Activated CD4-positive, alpha-beta T cell treated with anti-CD3 and anti-CD28 coated beads, Interleukin-2, amount 10 ng/mL, durations not matched to agents 24 days and 14 days (primary cell): ENCODE measurements at regions of chr12 and their contacts with region 1.

Region 1: GRCh38 chr12:56189176-56189917 is at the start of gene SMARCC2:
- DNase-seq: peak; percentile 96
- H3K4me3 Mint-ChIP-seq: peak within 1 kb of the TSS; percentile 97
- H3K27ac Mint-ChIP-seq: peak within 1 kb of the TSS; percentile 95
- H3K4me1 Mint-ChIP-seq: peaks cover 42% of the 10 kb centered on the region
- H3K27me3 Mint-ChIP-seq: no peaks in the 10 kb centered on the region
- total RNA-seq, gene SMARCC2: 127 and 130 TPM in 2 replicates

Region 2: GRCh38 chr12:55797068-55797467 is 392.3 kb before region 1 on chr12:
- intact Hi-C with region 1: no loop called
- DNase-seq: peak; percentile 73
- H3K4me3 Mint-ChIP-seq: no peak overlapping the region
- H3K27ac Mint-ChIP-seq: peak overlapping the region; percentile 26
- H3K4me1 Mint-ChIP-seq: peaks cover 8% of the 10 kb centered on the region
- H3K27me3 Mint-ChIP-seq: no peaks in the 10 kb centered on the region

Region 3: GRCh38 chr12:55996715-55997534 is 192.4 kb before region 1 on chr12 and contains the start of gene SUOX:
- intact Hi-C with region 1: no loop called
- DNase-seq: peak; percentile 86
- H3K4me3 Mint-ChIP-seq: peak within 1 kb of the TSS; percentile 87
- H3K27ac Mint-ChIP-seq: peak within 1 kb of the TSS; percentile 53
- H3K4me1 Mint-ChIP-seq: peaks cover 28% of the 10 kb centered on the region
- H3K27me3 Mint-ChIP-seq: no peaks in the 10 kb centered on the region
- total RNA-seq, gene SUOX: 9.3 and 10.2 TPM in 2 replicates

Region 4: DNA sequence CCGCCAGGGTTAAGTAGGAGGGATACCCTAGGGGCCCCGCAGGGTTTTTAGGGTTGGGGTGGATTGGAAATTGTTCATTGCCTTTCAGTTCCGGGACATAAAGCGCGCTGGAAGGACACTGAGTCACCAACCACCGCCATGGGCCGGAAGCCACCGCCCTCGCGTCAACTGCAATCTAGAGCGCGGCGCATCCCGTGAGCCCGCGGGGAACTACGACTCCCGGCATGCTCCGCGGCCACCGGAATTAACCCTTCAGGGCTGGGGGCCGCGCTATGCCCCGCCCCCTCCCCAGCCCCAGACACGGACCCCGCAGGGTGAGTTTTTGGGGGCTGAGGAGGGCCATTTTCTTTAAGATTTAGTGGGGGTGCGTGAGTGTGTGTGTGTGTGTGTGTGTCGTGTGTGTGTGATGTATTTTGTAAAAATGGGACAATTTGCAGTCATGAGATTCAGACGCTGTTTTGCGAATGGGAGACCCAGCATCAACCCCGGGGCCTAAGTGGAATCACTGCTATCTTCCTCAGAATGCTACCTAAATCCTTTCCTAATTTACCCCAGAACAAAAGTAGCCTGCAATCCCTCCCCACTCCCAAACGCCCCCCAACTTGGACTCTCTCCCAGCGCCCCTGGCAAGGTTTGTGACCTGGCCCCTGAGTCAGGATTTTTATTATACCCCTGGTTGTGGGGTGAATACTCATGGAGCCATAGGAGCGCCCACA is 36.9 kb before region 1 on chr12 and contains the start of gene MYL6B:
- intact Hi-C with region 1: loop called (anchors 2 kb)
- DNase-seq: peak; percentile 98
- H3K4me3 Mint-ChIP-seq: peak within 1 kb of the TSS; percentile 88
- H3K27ac Mint-ChIP-seq: peak within 1 kb of the TSS; percentile 98
- H3K4me1 Mint-ChIP-seq: peaks cover 39% of the 10 kb centered on the region
- H3K27me3 Mint-ChIP-seq: no peaks in the 10 kb centered on the region
- total RNA-seq, gene MYL6B: 63.3 and 68.9 TPM in 2 replicates

Region 5: DNA sequence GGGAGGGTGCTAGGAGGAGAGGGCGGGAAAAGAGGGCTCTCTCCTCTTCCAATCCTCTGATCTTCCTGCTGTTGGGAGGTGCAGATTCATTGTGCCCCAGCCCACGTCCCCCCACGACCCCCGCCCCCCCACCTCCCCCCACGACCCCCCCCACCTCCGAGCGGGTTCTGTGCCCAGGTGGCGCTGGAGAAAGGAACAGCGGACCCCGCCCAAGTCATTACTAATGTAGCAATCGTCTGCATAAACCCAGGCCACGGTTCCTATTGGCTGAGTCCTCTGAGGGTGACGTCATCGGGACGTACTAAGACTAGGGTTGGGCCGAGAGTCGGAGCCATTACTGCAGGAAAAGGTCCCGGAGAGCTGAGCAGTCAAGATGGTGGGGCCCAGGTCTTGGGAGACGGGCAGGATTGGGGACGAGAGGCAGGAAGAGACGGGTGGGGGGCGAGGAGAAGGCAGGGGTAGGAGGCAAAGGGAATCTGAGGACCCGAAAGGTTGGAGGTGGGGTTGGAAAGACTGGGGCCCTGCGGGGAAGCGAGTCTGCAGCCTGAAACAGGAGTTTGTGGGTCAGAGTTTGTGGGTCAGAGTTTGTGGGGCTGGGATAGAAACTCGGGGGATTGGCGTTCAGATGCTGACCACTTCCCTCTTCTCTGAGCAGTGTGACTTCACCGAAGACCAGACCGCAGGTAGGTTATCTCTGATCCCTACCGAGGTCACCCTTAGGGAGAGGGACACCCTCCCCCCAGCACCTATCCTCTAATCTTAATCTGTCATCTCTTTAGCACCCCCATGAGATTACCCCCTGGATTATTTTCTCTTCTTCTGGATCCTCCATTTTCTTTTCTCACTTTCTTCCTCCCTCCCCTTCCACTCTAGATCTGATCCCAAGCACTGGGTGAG is 31.1 kb before region 1 on chr12 and contains the start of gene MYL6:
- intact Hi-C with region 1: loop called (anchors 2 kb)
- DNase-seq: peak; percentile 98
- H3K4me3 Mint-ChIP-seq: peak within 1 kb of the TSS; percentile 100
- H3K27ac Mint-ChIP-seq: peak within 1 kb of the TSS; percentile 94
- H3K4me1 Mint-ChIP-seq: peaks cover 45% of the 10 kb centered on the region
- H3K27me3 Mint-ChIP-seq: no peaks in the 10 kb centered on the region
- total RNA-seq, gene MYL6: 717 and 752 TPM in 2 replicates

Region 6: GRCh38 chr12:56258057-56258819 is 68.9 kb after region 1 on chr12 and contains the start of gene ANKRD52:
- intact Hi-C with region 1: loop called (anchors 1 kb)
- DNase-seq: peak; percentile 96
- H3K4me3 Mint-ChIP-seq: peak within 1 kb of the TSS; percentile 96
- H3K27ac Mint-ChIP-seq: peak within 1 kb of the TSS; percentile 84
- H3K4me1 Mint-ChIP-seq: peaks cover 17% of the 10 kb centered on the region
- H3K27me3 Mint-ChIP-seq: no peaks in the 10 kb centered on the region
- total RNA-seq, gene ANKRD52: 68.0 and 69.0 TPM in 2 replicates